HEK293 (cell line): ENCODE measurements at regions of chr6 and their contacts with region 1.

Region 1: DNA sequence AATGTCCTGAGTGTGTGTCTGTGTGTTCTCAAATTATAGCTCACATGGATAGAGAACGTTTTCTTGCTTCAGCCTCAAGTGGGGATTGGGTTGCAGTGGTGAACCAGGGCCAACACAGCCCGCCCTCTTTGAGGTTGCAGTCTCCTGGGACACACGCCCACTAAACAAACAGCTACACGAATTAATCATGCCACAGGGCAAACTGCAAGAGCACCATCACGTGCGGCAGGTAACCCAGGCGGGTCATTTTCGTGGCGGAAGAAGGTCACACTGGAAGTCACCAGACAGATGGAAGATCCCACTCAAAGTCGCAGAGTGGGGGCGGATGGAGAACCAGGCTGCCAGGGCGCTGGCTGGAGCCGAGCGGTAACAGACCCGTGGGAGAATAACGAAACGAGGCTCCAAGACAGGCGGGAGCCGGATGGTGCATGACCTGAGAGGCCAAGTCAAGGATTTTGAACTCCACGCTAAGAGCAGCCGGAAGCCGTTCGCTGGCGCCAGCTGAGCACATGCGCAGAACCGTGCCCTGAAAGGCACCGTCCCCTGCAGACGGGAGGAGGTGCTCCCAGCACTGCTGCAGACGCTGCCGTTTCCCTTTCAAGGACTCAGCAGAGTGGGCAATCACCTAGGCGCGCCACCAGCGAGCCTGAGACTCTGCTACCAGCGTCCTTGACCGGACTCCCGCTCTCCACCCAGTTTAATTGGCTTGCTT is 10.7 kb downstream of the DLL1 start:
- H3K4me3 ChIP-seq: no peak overlapping the region
- H3K27ac ChIP-seq: peak overlapping the region; percentile 40; the same call in 1 of the 2 replicates
- H3K4me1 ChIP-seq: peaks cover 3% of the 10 kb centered on the region; the same call in 1 of the 2 replicates
- CTCF ChIP-seq: no peak

Region 2: DNA sequence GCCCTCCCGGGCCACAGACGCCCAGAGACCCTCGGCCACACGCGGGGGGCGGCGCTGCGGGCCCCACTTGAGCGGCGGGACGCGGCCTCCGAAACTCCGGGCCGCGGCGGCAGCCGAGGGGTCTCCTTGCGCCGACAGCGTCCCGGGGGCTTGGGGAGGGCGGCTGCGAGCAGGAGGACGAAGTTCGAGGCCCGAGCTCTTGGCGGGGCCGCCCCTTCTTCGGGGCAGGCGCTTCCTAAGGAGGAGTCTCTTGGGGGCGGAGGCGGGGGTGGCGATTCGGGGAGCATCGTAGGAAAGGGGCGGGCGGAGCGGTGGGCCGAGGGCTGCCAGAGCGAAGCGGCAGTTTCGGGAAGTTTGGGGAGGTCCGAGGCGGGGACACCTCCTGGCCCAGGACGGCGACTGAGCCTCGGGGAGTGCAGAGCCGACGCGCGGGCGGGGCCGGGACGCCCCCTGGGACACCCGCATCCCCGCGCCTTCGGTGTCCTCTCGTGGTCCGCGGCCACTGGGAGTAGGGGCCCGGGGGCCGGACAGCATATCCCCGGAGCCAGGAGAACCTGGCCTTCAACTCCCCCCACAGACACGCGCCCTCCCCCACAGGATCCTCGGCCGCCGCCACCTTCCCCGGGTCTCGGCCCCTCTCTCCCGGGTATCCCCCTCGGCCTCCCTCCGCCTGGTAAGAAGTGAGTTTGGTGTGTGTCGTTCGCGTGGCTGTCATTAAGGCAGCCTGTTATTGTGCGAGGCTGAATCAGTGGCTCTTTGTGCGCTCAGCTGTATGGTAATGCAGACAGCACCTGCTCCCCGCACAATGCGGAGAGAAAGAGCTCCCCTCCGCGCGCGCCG is 11.4 kb after region 1 on chr6:
- CTCF ChIA-PET with region 1: interaction called, 3 read pairs
- POLR2A ChIA-PET with region 1: interaction called, 20 read pairs
- H3K4me3 ChIP-seq: peak overlapping the region; percentile 24
- H3K27ac ChIP-seq: peak overlapping the region; percentile 50; the same call in 1 of the 2 replicates
- H3K4me1 ChIP-seq: peaks cover 8% of the 10 kb centered on the region
- CTCF ChIP-seq: no peak